Mucosa of descending colon (tissue), 3 donors: ENCODE measurements at regions of chr6 and their contacts with region 1.

Region 1: GRCh38 chr6:21754891-21755290 is 161.3 kb downstream of the SOX4 start:
- DNase-seq: no peak
- ATAC-seq: peak; percentile 70
- H3K4me3 ChIP-seq: no peak overlapping the region
- H3K4me1 ChIP-seq: peaks cover 5% of the 10 kb centered on the region
- CTCF ChIP-seq: no peak

Region 2: GRCh38 chr6:21461844-21462518 is 292.9 kb before region 1 on chr6:
- intact Hi-C with region 1: no loop called
- DNase-seq: no peak
- ATAC-seq: no peak
- H3K4me3 ChIP-seq: no peak overlapping the region
- H3K4me1 ChIP-seq: no peaks in the 10 kb centered on the region
- CTCF ChIP-seq: no peak

Region 3: GRCh38 chr6:21664314-21665109 is 90.4 kb before region 1 on chr6:
- intact Hi-C with region 1: loop called in 1 of 2 experiments (anchors 10 kb)
- DNase-seq: peak in 2 of 3 donors; percentile 12 to 51
- ATAC-seq: peak; percentile 68
- H3K4me3 ChIP-seq: no peak overlapping the region
- H3K4me1 ChIP-seq: peaks cover 20% of the 10 kb centered on the region
- CTCF ChIP-seq: no peak